Activated CD4-positive, alpha-beta memory T cell treated with anti-CD3 and anti-CD28 coated beads for 36 hours (primary cell): ENCODE measurements at regions of chr20 and their contacts with region 1.

Region 1: DNA sequence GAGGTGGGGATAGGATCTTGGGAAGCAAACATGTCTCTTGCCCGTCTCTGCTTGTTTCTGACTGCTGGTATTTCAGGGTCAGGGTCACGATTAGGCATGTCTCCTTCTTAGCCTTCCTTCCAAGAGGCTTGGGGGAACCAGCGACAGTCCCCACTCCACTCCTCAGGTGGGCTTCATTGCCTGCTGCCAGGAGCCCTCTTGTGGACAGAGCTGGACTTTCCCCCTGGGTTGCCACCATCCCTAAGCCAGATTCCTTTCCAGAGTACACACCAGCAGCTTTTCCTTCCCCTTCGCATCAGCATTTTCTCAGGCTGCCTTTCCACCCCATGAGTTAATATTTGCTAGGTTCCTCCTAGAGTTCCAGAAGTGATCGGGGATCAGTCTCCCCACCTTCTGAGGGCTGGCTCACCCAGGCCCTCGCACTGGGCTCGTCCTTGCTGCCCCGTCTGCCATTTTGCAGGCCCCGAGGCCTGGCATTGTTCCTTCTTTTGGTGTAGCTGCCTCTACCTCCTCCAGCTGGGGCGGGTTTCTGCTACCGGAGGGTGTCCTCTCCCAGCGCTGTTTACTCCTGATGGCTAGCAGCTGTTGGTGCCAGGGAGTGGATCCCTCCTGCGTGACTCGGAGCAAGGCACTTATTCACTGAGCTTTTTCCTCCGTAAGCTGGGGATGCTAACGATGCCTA is 8.8 kb upstream of the C20orf144 start:
- DNase-seq: peak; percentile 60
- H3K4me3 Mint-ChIP-seq: no peak overlapping the region
- H3K27ac Mint-ChIP-seq: peak overlapping the region; percentile 80
- H3K4me1 Mint-ChIP-seq: peaks cover 47% of the 10 kb centered on the region
- H3K27me3 Mint-ChIP-seq: no peaks in the 10 kb centered on the region

Region 2: DNA sequence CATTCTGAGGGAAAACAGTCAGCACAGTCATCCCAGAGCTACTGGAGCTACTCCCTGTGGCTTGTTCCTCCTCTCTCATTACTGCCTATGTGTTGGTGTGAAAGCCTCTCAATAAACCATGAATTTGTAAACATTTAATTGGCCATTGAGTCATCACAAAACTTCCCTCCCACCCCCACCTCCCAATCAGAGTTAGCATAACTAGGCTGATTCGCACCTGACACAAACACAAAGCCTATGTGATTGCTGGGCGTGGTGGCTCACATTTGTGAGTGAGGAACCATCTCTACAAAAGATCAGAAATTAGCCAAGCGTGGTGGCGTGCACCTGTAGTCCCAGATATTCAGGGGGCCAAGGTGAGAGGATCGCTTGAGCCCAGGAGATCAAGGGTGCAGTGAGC is 192.6 kb before region 1 on chr20:
- CTCF ChIA-PET with region 1: interaction called, 8 read pairs
- POLR2A ChIA-PET with region 1: no interaction called
- intact Hi-C with region 1: loop called (anchors 1 kb)
- DNase-seq: peak; percentile 21
- H3K4me3 Mint-ChIP-seq: no peak overlapping the region
- H3K27ac Mint-ChIP-seq: no peak overlapping the region
- H3K4me1 Mint-ChIP-seq: no peaks in the 10 kb centered on the region
- H3K27me3 Mint-ChIP-seq: no peaks in the 10 kb centered on the region

Region 3: DNA sequence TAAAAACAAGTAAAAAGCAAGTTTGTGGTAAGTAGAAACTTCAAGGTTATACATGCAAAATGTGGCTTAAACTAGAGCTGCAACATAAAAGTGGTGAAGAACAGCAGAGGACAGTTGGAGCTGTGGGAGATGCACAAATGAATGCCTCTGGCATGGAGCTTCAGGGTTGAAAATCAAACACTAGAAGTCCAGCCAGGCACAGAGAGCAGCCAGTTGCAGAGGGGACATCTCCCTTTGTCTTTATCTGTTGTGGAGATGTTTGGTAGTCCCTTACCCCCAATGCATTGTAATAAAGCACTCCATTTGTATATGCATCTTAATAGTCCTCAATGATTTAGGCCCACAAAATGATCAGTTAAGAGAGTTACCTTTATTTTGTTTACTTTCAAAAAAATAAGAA is 64.3 kb before region 1 on chr20:
- CTCF ChIA-PET with region 1: no interaction called
- POLR2A ChIA-PET with region 1: no interaction called
- intact Hi-C with region 1: loop called (anchors 1 kb)
- DNase-seq: no peak
- H3K4me3 Mint-ChIP-seq: no peak overlapping the region
- H3K27ac Mint-ChIP-seq: no peak overlapping the region
- H3K4me1 Mint-ChIP-seq: peaks cover 18% of the 10 kb centered on the region
- H3K27me3 Mint-ChIP-seq: no peaks in the 10 kb centered on the region

Region 4: GRCh38 chr20:33602826-33603590 is 50.4 kb before region 1 on chr20:
- CTCF ChIA-PET with region 1: interaction called, 3 read pairs
- POLR2A ChIA-PET with region 1: no interaction called
- intact Hi-C with region 1: loop called (anchors 2 kb)
- DNase-seq: no peak
- H3K4me3 Mint-ChIP-seq: no peak overlapping the region
- H3K27ac Mint-ChIP-seq: peak overlapping the region; percentile 35
- H3K4me1 Mint-ChIP-seq: peaks cover 20% of the 10 kb centered on the region
- H3K27me3 Mint-ChIP-seq: no peaks in the 10 kb centered on the region

Region 5: GRCh38 chr20:33640297-33640696 is 13.1 kb before region 1 on chr20:
- CTCF ChIA-PET with region 1: no interaction called
- POLR2A ChIA-PET with region 1: no interaction called
- intact Hi-C with region 1: no loop called
- DNase-seq: no peak
- H3K4me3 Mint-ChIP-seq: no peak overlapping the region
- H3K27ac Mint-ChIP-seq: no peak overlapping the region
- H3K4me1 Mint-ChIP-seq: no peaks in the 10 kb centered on the region
- H3K27me3 Mint-ChIP-seq: no peaks in the 10 kb centered on the region